Naive thymus-derived CD4-positive, alpha-beta T cell (primary cell): ENCODE measurements at regions of chr16 and their contacts with region 1.

Region 1: DNA sequence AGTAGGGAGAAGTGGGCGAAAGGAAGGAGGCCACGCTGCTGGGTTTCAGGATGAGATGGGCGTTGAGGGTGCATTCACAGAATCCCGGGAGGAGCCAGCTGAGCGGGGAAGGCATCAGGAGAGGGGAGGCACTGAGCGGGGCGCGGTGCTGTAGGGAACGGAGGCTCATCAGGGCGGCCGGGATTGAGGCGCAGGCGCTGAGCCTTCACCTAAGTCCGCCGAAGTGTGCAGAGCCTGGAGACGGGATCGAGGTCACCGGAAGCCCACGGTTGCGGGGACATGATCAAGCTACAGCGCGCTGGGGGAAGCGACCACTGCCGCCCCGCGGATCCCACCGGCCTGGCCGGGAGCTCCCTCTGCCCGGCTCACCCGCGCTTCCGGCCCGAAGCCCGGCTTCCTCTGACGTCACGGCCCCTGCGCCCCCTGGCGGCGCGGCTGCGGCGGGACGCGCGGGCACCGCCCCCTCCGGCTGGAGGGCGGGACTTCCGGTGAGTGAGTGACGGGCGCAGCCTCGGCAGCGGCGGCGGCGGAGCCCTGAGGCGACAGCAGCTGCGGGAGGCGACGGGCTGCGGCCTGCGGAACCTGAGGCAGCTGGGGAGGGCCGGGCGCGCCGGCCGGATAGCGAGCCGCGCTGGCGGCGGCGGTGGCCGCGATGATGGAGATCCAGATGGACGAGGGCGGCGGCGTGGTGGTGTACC is at the start of gene MAPK8IP3:
- DNase-seq: peak; percentile 85 to 100 (median 98)
- ATAC-seq: peak; percentile 93
- H3K4me3 ChIP-seq: peak within 1 kb of the TSS; percentile 98
- H3K4me3 Mint-ChIP-seq: peak within 1 kb of the TSS; percentile 95 to 100 (median 98)
- H3K27ac ChIP-seq: peak within 1 kb of the TSS; percentile 96
- H3K27ac Mint-ChIP-seq: peak within 1 kb of the TSS; percentile 95 to 99 (median 97)
- H3K4me1 ChIP-seq: peaks cover 18 to 25% of the 10 kb centered on the region in 2 donors
- H3K4me1 Mint-ChIP-seq: peaks cover 0 to 48% (median 32%) of the 10 kb centered on the region in 7 donors
- H3K27me3 ChIP-seq: no peaks in the 10 kb centered on the region
- H3K27me3 Mint-ChIP-seq: no peaks in the 10 kb centered on the region
- total RNA-seq, gene MAPK8IP3: 112 to 299 (median 272) TPM

Region 2: GRCh38 chr16:1342526-1343427 is 363.1 kb before region 1 on chr16:
- CTCF ChIA-PET with region 1: no interaction called
- POLR2A ChIA-PET with region 1: no interaction called
- intact Hi-C with region 1: loop called in 1 of 2 experiments (anchors 5 kb)
- DNase-seq: peak; percentile 85 to 97 (median 94)
- ATAC-seq: peak; percentile 97
- H3K4me3 ChIP-seq: peak overlapping the region; percentile 66
- H3K4me3 Mint-ChIP-seq: peak overlapping the region; percentile 60 to 86 (median 80)
- H3K27ac ChIP-seq: no peak overlapping the region
- H3K27ac Mint-ChIP-seq: peak overlapping the region in 8 of 9 donors; percentile 14 to 79 (median 45)
- H3K4me1 ChIP-seq: peaks cover 11 to 17% of the 10 kb centered on the region in 2 donors
- H3K4me1 Mint-ChIP-seq: peaks cover 7 to 18% (median 15%) of the 10 kb centered on the region in 7 donors
- H3K27me3 ChIP-seq: no peaks in the 10 kb centered on the region
- H3K27me3 Mint-ChIP-seq: no peaks in the 10 kb centered on the region

Region 3: GRCh38 chr16:1492923-1493745 is 212.7 kb before region 1 on chr16 and contains the start of gene TELO2:
- CTCF ChIA-PET with region 1: no interaction called
- POLR2A ChIA-PET with region 1: interaction called, 8 read pairs
- intact Hi-C with region 1: loop called in 1 of 2 experiments (anchors 10 kb)
- DNase-seq: peak; percentile 82 to 96 (median 90)
- ATAC-seq: peak; percentile 96
- H3K4me3 ChIP-seq: peak within 1 kb of the TSS; percentile 59
- H3K4me3 Mint-ChIP-seq: peak within 1 kb of the TSS; percentile 83 to 99 (median 94)
- H3K27ac ChIP-seq: peak within 1 kb of the TSS; percentile 88
- H3K27ac Mint-ChIP-seq: peak within 1 kb of the TSS; percentile 97 to 100 (median 99)
- H3K4me1 ChIP-seq: peaks cover 12 to 17% of the 10 kb centered on the region in 2 donors
- H3K4me1 Mint-ChIP-seq: peaks cover 9 to 20% (median 12%) of the 10 kb centered on the region in 7 donors
- H3K27me3 ChIP-seq: no peaks in the 10 kb centered on the region
- H3K27me3 Mint-ChIP-seq: no peaks in the 10 kb centered on the region
- total RNA-seq, gene TELO2: 46.9 to 58.9 (median 50.3) TPM

Region 4: GRCh38 chr16:1533443-1533951 is 172.3 kb before region 1 on chr16 and contains the start of gene TMEM204:
- CTCF ChIA-PET with region 1: interaction called, 3 read pairs
- POLR2A ChIA-PET with region 1: interaction called, 10 read pairs
- intact Hi-C with region 1: no loop called
- DNase-seq: peak in 8 of 9 donors; percentile 39 to 69 (median 58)
- ATAC-seq: peak; percentile 56
- H3K4me3 ChIP-seq: peak within 1 kb of the TSS; percentile 85
- H3K4me3 Mint-ChIP-seq: peak within 1 kb of the TSS; percentile 92 to 100 (median 98)
- H3K27ac ChIP-seq: peak within 1 kb of the TSS; percentile 84
- H3K27ac Mint-ChIP-seq: peak within 1 kb of the TSS; percentile 76 to 97 (median 94)
- H3K4me1 ChIP-seq: peaks cover 32 to 38% of the 10 kb centered on the region in 2 donors
- H3K4me1 Mint-ChIP-seq: peaks cover 35 to 56% (median 46%) of the 10 kb centered on the region in 7 donors
- H3K27me3 ChIP-seq: no peaks in the 10 kb centered on the region
- H3K27me3 Mint-ChIP-seq: peaks cover 0 to 3% (median 0%) of the 10 kb centered on the region in 5 donors
- total RNA-seq, gene TMEM204: 26.3 to 162 (median 47.5) TPM

Region 5: DNA sequence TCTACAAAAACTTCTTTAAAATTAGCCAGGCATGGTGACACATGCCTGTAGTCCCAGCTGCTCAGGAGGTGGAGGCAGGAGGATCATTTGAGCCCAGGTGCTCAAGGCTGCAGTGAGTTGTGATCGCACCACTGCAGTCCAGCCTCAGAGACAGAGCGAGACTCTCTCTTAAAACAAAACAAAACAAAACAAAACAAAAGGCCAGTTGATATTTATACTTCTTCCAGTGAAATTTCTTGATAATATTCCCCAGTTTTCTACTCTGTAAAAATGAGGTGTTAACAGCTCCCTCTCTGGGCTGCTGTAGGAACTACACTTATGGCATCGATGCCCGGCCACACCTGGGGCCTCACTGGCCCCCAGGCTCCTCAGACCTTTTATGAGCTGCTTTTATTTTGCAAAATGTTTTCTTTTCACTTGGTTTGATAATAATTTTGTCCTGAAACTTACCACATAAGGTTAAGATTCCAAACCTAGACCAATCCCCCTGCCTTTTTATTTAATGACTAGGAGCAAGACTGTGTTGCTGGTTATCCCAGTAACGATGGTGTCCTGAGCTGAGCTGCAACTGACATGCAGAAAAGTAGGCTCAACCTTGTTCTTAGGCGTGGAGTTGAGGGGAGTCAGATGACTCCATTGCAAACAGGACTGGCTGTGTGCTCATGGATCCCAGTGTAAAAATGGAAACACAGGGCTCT is 17.8 kb after region 1 on chr16:
- CTCF ChIA-PET with region 1: interaction called, 4 read pairs
- POLR2A ChIA-PET with region 1: interaction called, 11 read pairs
- intact Hi-C with region 1: no loop called
- DNase-seq: peak in 7 of 9 donors; percentile 14 to 48 (median 39)
- ATAC-seq: peak; percentile 64
- H3K4me3 ChIP-seq: no peak overlapping the region
- H3K4me3 Mint-ChIP-seq: peak overlapping the region in 5 of 10 donors; percentile 13 to 57 (median 37)
- H3K27ac ChIP-seq: peak overlapping the region; percentile 4
- H3K27ac Mint-ChIP-seq: peak overlapping the region in 8 of 9 donors; percentile 32 to 74 (median 55)
- H3K4me1 ChIP-seq: peaks cover 17 to 28% of the 10 kb centered on the region in 2 donors
- H3K4me1 Mint-ChIP-seq: peaks cover 29 to 53% (median 44%) of the 10 kb centered on the region in 7 donors
- H3K27me3 ChIP-seq: no peaks in the 10 kb centered on the region
- H3K27me3 Mint-ChIP-seq: no peaks in the 10 kb centered on the region

Region 6: DNA sequence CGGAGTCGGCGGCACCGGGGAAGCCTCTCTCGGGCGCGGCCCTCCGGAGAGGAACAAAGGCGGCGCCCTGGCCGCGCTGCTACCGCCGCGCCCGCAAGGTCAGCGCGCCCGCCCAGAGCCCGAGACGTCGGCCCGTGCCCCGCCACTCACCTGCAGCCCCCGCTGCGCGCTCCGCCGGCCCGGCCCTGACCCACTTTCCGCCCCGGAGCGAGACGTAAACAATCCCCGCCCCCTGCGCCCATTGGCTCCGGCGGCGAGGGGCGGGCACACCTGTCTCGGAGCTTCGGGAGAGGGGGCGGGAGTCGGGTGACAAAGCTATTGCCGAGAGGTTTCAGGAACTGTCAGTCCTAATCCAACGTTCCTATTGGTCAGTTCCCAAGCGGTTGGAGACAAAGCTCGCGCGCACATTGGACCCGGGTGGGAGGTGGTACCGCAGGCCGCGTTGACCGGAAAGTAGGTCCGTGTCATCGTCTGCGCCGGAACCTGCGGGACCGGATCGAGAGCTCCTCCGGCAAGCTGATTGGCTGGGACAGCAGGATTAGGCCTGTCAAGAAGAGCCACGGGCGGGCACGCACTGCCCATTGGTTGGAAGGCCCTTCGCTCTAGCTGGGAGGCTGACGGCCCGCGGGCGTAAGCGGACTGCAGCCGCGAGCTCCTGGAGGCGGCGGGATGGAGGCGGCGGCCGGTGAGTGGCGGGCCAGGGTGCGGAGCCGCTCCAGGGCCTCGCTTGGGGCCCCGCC is 76.7 kb after region 1 on chr16 and contains the starts of genes NUBP2 and SPSB3:
- CTCF ChIA-PET with region 1: interaction called, 10 read pairs
- POLR2A ChIA-PET with region 1: interaction called, 17 read pairs
- intact Hi-C with region 1: no loop called
- DNase-seq: peak; percentile 83 to 98 (median 97)
- ATAC-seq: peak; percentile 92
- H3K4me3 ChIP-seq: peak within 1 kb of the TSS; percentile 92
- H3K4me3 Mint-ChIP-seq: peak within 1 kb of the TSS; percentile 90 to 98 (median 94)
- H3K27ac ChIP-seq: peak within 1 kb of the TSS; percentile 76
- H3K27ac Mint-ChIP-seq: peak within 1 kb of the TSS; percentile 77 to 98 (median 93)
- H3K4me1 ChIP-seq: peaks cover 13 to 28% of the 10 kb centered on the region in 2 donors
- H3K4me1 Mint-ChIP-seq: peaks cover 0 to 48% (median 22%) of the 10 kb centered on the region in 7 donors
- H3K27me3 ChIP-seq: no peaks in the 10 kb centered on the region
- H3K27me3 Mint-ChIP-seq: peaks cover 0 to 2% (median 0%) of the 10 kb centered on the region in 5 donors
- total RNA-seq, gene NUBP2: 39.3 to 60.2 (median 48.6) TPM
- total RNA-seq, gene SPSB3: 38.2 to 127 (median 72.3) TPM

Region 7: DNA sequence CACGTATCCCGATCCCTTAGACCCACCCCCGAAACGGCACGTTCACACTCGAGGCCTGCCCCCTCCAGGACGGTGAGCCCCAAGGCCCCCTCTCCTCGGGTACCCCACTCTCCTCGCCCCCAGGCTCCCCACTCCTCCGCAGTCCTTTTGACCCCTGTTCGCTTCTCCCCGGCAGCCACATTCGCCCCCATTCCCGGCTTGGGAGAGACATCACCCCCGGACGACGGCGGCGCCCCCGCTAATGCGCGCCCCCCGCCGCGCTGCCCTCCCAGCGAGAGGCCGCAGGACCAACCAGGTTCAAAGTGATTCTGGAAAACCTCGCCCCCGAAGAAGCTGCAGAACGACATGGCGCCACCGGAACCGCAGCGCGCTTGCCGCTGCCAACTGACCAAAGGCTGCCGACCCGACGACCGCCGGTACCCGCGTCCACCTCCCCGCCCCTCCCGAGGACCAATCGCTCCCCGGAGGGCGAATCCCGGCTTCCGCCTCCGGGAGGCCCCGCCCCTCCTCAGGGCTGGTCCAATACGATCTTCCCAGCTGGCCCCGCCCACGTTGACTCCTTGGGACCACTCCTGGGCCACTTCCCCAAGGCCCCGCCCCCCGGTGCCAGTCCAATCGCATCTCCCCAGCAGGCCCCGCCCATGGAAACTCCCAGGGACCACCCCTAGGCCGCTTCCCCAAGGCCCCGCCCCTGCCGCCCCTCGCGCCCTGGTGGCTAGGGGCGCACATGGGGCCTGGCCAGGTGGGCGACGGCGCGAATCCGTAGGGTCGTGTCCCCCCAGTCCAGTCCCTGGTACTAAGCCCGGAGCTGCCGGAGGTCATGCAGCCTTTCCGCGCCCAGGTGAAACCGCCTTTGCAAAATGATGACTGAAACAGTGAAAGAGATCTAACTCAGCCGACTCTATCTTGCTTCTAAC is 237.2 kb after region 1 on chr16 and contains the start of gene MSRB1:
- CTCF ChIA-PET with region 1: interaction called, 7 read pairs
- POLR2A ChIA-PET with region 1: no interaction called
- intact Hi-C with region 1: loop called in 1 of 2 experiments (anchors 10 kb)
- DNase-seq: peak; percentile 97 to 100 (median 98)
- ATAC-seq: peak; percentile 100
- H3K4me3 ChIP-seq: peak within 1 kb of the TSS; percentile 90
- H3K4me3 Mint-ChIP-seq: peak within 1 kb of the TSS; percentile 74 to 90 (median 87)
- H3K27ac ChIP-seq: peak within 1 kb of the TSS; percentile 76
- H3K27ac Mint-ChIP-seq: peak within 1 kb of the TSS; percentile 41 to 90 (median 65)
- H3K4me1 ChIP-seq: peaks cover 6 to 7% of the 10 kb centered on the region in 2 donors
- H3K4me1 Mint-ChIP-seq: peaks cover 4 to 24% (median 11%) of the 10 kb centered on the region in 7 donors
- H3K27me3 ChIP-seq: no peaks in the 10 kb centered on the region
- H3K27me3 Mint-ChIP-seq: no peaks in the 10 kb centered on the region
- total RNA-seq, gene MSRB1: 5.5 to 27.0 (median 8.2) TPM